ENCODE measurements at regions of chr7 and their contacts with region 1.

Region 1: DNA sequence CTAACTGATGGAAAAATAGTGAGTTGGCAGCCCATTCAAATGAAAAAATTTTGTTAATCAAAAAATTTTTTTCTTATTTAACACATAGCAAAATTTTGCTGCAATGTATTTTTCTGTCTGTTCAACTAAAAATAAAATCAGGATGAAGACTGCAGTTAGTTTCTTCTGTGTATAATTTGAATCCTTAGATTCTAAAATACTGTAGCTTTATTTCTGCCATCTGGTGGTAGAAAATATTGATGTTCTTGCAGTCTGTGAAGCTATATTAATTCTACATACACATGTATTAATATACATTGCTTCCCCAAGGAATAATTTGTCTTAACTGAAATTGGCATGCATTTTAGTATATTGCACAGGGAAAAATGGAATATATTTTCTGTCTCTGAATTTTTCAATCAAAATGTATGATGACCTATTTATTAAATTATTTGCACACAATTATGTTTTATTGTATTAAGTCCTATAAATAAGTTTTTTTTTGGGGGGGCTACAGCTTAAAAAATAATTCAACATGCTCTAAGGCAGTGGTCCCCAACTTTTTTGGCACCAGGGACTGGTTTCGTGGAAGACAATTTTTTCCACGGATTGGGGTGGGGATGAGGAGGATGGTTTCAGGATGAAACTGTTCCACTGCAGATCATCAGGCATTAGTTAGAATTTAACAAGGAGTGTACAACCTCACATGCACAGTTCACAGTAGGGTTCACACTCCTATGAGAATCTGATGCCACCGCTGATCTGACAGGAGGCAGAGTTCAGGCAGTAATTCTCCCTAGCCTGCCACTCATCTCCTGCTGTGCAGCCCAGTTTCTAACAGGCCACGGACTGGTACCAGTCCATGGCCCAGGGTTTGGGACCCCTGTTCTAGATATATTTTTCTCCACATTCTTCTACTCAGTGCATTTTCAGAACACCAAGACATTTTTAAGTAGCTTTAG is 119.4 kb downstream of the GNAT3 start:
- DNase-seq: no peak
- ATAC-seq: no peak
- H3K4me3 ChIP-seq: no peak overlapping the region
- H3K27ac ChIP-seq: no peak overlapping the region
- H3K4me1 ChIP-seq: no peaks in the 10 kb centered on the region
- H3K27me3 ChIP-seq: no peaks in the 10 kb centered on the region
- CTCF ChIP-seq: peak in 4 of 5 experiments; percentile 13 to 47 (median 35)
- POLR2A ChIP-seq: no peak

Region 2: GRCh38 chr7:80060218-80060806 is 332.2 kb before region 1 on chr7:
- in situ Hi-C with region 1: loop called in 3 of 4 experiments (anchors 10 to 25 kb)
- intact Hi-C with region 1: no loop called
- DNase-seq: no peak
- ATAC-seq: no peak
- H3K4me3 ChIP-seq: no peak overlapping the region
- H3K27ac ChIP-seq: no peak overlapping the region
- H3K4me1 ChIP-seq: no peaks in the 10 kb centered on the region
- H3K27me3 ChIP-seq: no peaks in the 10 kb centered on the region
- CTCF ChIP-seq: peak in 3 of 5 experiments; percentile 34 to 55 (median 48)
- POLR2A ChIP-seq: no peak

Region 3: GRCh38 chr7:80095545-80095944 is 297.0 kb before region 1 on chr7:
- in situ Hi-C with region 1: loop called in 1 of 4 experiments (anchors 25 kb)
- intact Hi-C with region 1: loop called (anchors 10 kb)
- DNase-seq: no peak
- ATAC-seq: no peak
- H3K4me3 ChIP-seq: no peak overlapping the region
- H3K27ac ChIP-seq: no peak overlapping the region
- H3K4me1 ChIP-seq: no peaks in the 10 kb centered on the region
- H3K27me3 ChIP-seq: no peaks in the 10 kb centered on the region
- CTCF ChIP-seq: peak in 2 of 5 experiments; percentile 28 to 49
- POLR2A ChIP-seq: no peak

Region 4: GRCh38 chr7:80348223-80348622 is 44.3 kb before region 1 on chr7:
- in situ Hi-C with region 1: no loop called
- intact Hi-C with region 1: no loop called
- DNase-seq: no peak
- ATAC-seq: no peak
- H3K4me3 ChIP-seq: no peak overlapping the region
- H3K27ac ChIP-seq: no peak overlapping the region
- H3K4me1 ChIP-seq: peaks cover 0 to 3% of the 10 kb centered on the region in 2 donors
- H3K27me3 ChIP-seq: no peaks in the 10 kb centered on the region
- CTCF ChIP-seq: no peak
- POLR2A ChIP-seq: no peak

Region 5: DNA sequence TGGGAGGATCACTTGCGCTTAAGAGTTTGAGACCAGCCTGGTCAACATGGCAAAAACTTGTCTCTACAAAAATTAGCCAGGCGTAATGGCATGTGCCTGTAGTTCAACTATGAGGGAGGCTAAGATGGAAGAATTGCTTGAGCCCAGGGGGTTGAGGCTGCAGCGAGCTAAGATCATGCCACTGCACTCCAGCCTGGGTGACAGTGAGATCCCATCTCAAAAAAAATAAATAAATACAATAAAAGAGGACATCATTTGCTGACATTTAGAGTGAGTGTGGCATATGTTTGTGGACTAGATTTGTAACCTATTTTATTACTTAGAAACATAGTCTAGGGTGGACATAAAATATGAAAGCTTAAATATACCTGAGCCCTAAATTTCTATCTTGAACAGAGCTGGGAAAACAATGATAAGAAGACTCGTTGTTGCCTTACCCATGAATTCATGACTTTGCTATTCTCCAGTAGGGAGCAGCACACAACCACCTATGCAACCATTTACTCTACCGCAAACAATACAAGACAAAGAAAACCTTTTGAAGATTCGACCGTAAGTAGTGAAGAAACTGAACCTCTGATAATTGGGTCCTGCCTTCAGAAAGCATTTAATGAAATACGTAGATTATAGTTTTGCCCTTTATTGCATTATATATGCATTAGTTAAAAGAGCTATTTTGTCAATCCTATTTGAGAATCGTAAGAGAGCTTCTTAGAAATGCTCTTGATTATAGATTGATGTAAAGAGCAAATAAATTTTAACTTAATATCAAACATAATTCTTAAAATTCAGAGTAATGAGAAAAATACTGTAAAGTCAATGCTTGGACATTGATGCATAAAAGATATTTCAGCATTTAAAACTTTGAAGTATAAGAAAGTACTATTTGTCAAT is 35.9 kb after region 1 on chr7:
- in situ Hi-C with region 1: no loop called
- intact Hi-C with region 1: no loop called
- DNase-seq: peak in 1 of 2 donors; percentile 33
- ATAC-seq: peak; percentile 95 to 97
- H3K4me3 ChIP-seq: peak overlapping the region in 1 of 4 donors; percentile 7
- H3K27ac ChIP-seq: no peak overlapping the region
- H3K4me1 ChIP-seq: no peaks in the 10 kb centered on the region
- H3K27me3 ChIP-seq: no peaks in the 10 kb centered on the region
- CTCF ChIP-seq: peak; percentile 65 to 85 (median 74)
- POLR2A ChIP-seq: no peak

Region 6: GRCh38 chr7:81370822-81371221 is 978.3 kb after region 1 on chr7:
- in situ Hi-C with region 1: no loop called
- intact Hi-C with region 1: no loop called
- DNase-seq: no peak
- ATAC-seq: no peak
- H3K4me3 ChIP-seq: no peak overlapping the region
- H3K27ac ChIP-seq: no peak overlapping the region
- H3K4me1 ChIP-seq: no peaks in the 10 kb centered on the region
- H3K27me3 ChIP-seq: no peaks in the 10 kb centered on the region
- CTCF ChIP-seq: no peak
- POLR2A ChIP-seq: no peak

Measured in gastrocnemius medialis (tissue), 4 donors.